ENCODE measurements at regions of chr7 and their contacts with region 1.

Region 1: GRCh38 chr7:18666107-18666728 is 170.7 kb downstream of the HDAC9 start:
- DNase-seq: peak; percentile 24
- H3K4me3 ChIP-seq: no peak overlapping the region
- H3K27ac ChIP-seq: no peak overlapping the region
- H3K27me3 ChIP-seq: no peaks in the 10 kb centered on the region
- CTCF ChIP-seq: peak; percentile 89

Region 2: DNA sequence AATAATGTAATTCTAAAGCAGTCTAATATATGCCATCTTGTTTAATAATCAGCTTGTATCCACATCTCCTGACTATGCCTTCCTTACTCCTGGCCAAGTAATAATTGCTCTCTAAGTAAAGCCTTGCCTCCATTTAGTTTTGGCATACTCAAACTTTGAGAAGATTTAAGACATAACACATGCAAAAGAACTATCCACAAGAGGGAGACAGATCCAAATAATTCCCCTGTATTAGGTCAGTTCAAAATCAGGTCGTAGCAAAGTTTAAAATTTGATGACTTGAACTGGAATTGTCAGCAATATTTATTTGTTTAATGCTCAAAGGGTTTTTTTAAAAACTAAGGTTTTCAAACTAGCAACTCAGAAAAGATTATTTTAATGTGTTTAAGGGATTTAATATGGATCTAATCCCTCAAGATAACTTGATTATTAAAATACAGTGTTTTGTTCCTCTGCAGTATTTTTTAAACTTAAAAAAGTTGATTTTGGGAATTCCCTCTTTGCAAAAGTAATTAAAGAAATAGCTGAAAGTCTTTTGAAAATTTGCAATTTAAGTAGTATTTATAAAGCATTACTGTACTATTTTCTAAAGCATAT is 75.4 kb before region 1 on chr7:
- CTCF ChIA-PET with region 1: interaction called, 79 read pairs
- POLR2A ChIA-PET with region 1: no interaction called
- DNase-seq: no peak
- H3K4me3 ChIP-seq: no peak overlapping the region
- H3K27ac ChIP-seq: no peak overlapping the region
- H3K27me3 ChIP-seq: no peaks in the 10 kb centered on the region
- CTCF ChIP-seq: peak; percentile 75

Region 3: DNA sequence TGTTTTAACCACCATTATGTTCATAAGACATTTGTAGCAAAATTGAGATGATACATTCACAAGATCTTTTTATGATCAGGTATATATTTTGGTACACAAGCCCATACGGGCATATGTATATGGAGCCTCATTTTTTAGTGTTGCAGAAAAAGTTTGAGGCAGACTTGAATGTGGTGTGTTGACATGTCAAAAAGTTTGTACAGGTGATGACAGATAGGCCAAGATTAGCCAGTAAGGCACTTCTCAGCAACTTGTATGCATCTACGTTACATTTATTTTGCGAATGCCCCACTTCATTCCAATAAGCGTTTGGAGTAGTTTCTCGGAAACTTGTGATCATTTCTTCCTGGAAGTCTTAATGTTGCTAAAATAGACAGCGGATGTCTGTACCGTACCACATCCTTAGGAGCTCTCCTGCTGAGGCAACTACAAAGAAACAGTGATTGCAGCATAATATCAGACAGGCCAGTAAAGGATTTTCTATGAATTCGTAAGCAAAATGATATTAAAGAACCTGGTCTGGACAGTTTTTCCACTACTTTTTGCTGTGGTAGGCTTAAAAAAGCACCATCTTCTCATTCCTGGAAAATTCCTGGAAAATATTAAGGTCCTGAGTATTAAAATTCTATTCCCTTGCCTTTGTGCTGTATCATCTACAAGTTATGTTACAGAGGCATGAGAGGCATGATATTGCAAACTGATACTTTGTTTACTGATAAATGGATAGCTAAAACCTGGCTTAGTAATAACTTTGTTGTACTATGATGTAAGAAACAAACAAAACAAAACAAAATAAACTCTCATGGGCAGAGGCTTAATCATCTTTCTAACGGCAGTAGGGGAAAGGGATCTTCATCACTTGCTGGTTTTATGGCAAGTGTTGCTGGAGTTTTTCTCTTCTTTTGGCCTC is 17.1 kb before region 1 on chr7:
- CTCF ChIA-PET with region 1: interaction called, 31 read pairs
- POLR2A ChIA-PET with region 1: no interaction called
- DNase-seq: no peak
- H3K4me3 ChIP-seq: no peak overlapping the region
- H3K27ac ChIP-seq: no peak overlapping the region
- H3K27me3 ChIP-seq: no peaks in the 10 kb centered on the region
- CTCF ChIP-seq: no peak

Region 4: DNA sequence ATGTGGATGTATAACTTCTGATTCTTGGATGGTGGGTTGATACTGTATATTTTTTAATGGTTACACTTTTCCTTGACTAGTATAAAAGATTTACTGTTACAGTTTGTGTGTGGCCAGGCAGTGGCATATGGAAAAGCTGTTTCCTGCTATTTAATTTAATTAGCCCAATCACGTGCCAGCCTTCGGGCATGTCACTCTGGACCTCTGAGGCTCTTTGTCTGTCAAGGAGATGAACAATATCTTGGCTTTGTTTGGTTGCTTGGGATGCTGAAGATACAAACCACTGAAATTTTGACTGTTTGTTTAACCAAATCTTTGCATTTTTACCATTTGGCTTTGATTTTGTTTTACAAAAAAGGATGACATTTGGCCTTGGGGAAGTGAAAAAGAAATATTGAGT is 14.4 kb after region 1 on chr7:
- CTCF ChIA-PET with region 1: interaction called, 13 read pairs
- POLR2A ChIA-PET with region 1: no interaction called
- DNase-seq: no peak
- H3K4me3 ChIP-seq: no peak overlapping the region
- H3K27ac ChIP-seq: no peak overlapping the region
- H3K27me3 ChIP-seq: no peaks in the 10 kb centered on the region
- CTCF ChIP-seq: no peak

Region 5: GRCh38 chr7:18693406-18693805 is 27.2 kb after region 1 on chr7:
- CTCF ChIA-PET with region 1: interaction called, 13 read pairs
- POLR2A ChIA-PET with region 1: no interaction called
- DNase-seq: peak; percentile 63
- H3K4me3 ChIP-seq: no peak overlapping the region
- H3K27ac ChIP-seq: no peak overlapping the region
- H3K27me3 ChIP-seq: no peaks in the 10 kb centered on the region
- CTCF ChIP-seq: peak; percentile 85

Region 6: DNA sequence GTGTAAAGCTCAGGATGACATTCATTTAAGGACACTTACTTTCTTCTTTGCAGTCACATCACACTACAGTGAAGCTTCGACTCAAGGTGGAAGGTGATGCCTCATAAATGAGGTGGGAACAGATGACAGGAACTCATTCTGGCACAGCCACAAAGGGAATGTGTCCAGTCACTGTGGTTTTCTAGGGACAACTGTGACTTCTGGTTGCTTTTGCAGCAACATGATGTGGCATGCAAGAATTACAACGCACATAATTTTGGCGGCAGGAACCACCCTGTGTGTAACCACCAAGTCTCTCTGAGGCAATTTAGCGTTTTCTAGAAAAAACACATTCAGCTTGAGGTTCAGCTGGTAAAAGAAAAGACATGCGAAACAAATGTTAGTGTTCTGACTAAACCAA is 511.1 kb after region 1 on chr7:
- CTCF ChIA-PET with region 1: no interaction called
- POLR2A ChIA-PET with region 1: no interaction called
- DNase-seq: no peak
- H3K4me3 ChIP-seq: no peak overlapping the region
- H3K27ac ChIP-seq: no peak overlapping the region
- H3K27me3 ChIP-seq: no peaks in the 10 kb centered on the region
- CTCF ChIP-seq: no peak

Measured in AG04450 (cell line).